HCT116 (cell line): ENCODE measurements at regions of chr4 and their contacts with region 1.

Region 1: DNA sequence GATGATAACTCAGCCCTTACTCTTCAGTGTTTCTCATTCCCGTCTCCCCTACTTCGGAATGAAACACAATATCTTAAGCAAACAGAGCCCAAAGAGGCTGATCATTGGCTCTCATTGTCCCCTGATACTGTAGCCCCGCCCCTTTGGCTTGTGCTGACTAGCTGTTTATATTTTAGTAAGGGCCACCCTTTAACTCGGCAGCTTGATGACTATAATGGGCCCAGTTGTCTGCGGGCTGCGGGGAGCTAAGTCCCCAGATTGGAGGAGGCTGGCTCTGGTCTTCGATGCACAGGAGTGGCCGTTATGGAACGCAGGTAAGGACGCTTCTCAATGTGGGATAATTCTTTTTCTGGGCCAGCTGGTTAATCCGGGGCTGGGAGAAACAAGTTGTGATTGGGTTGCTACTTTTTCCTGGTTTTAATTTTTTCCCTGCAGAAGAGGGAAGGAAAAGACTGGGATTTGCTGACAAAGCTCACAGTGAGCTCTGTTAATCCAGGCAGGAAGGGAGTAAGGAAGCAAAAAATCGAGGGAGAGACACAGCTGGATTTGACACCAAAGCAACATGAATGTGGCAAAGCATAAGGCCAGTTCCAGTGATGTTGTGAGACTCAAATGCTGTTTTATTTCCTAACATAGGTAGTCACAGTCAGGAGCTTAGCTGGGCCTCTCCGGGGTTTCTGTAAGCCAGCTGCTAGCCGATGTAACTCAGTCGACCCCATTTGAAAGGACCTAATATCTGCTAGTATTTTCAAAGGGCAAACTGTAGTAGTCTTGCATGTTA is at the start of gene TRIM2:
- DNase-seq: peak; percentile 86
- ATAC-seq: peak; percentile 73
- H3K4me3 ChIP-seq: peak within 1 kb of the TSS; percentile 64 to 69
- H3K27ac ChIP-seq: peak within 1 kb of the TSS; percentile 86
- H3K4me1 ChIP-seq: peaks cover 21 to 49% of the 10 kb centered on the region in 2 experiments
- H3K27me3 ChIP-seq: no peaks in the 10 kb centered on the region
- CTCF ChIP-seq: no peak
- POLR2A ChIP-seq: peak; percentile 82
- RAD21 ChIP-seq: no peak
- total RNA-seq, gene TRIM2: 41.4 TPM

Region 2: DNA sequence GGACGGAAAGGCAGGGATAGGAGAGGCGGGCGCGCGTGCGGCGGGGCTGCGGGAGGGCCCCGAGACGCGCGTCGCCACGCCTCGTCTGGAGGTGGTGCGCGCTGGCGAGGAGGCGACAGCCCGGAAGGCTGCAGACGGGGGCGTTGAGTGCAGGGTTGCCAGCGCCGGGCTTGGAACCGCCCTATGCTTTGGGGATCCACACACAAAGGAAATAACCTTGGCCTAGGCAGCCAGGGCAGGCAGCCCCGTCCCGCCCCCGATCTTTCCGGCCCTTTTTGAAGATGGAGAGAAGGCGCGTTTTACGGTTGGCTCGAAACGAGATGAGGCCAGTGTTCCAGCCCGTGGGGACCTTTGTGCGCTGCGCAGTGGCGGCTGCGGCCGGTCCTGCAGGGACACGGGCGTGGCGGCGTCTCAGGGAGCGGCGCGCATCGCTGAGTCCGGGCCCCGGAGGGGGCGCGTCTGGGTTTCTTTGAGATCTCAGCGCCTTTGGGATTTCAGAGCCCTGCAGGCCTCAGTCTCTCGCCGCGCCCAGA is 51.0 kb before region 1 on chr4:
- CTCF ChIA-PET with region 1: interaction called, 4 read pairs
- POLR2A ChIA-PET with region 1: interaction called, 4 read pairs
- RAD21 ChIA-PET with region 1: interaction called in 1 of 2 experiments, 4 read pairs
- intact Hi-C with region 1: loop called (anchors 2 kb)
- DNase-seq: no peak
- ATAC-seq: peak; percentile 83
- H3K4me3 ChIP-seq: peak overlapping the region; percentile 38 to 67
- H3K27ac ChIP-seq: peak overlapping the region; percentile 26; the same call in 1 of the 2 replicates
- H3K4me1 ChIP-seq: peaks cover 21 to 35% of the 10 kb centered on the region in 2 experiments
- H3K27me3 ChIP-seq: no peaks in the 10 kb centered on the region
- CTCF ChIP-seq: no peak
- POLR2A ChIP-seq: no peak
- RAD21 ChIP-seq: no peak

Region 3: GRCh38 chr4:154332681-154333421 is 1128.4 kb after region 1 on chr4:
- CTCF ChIA-PET with region 1: no interaction called
- POLR2A ChIA-PET with region 1: no interaction called
- RAD21 ChIA-PET with region 1: no interaction called
- intact Hi-C with region 1: no loop called
- DNase-seq: no peak
- ATAC-seq: no peak
- H3K4me3 ChIP-seq: no peak overlapping the region
- H3K27ac ChIP-seq: no peak overlapping the region
- H3K4me1 ChIP-seq: no peaks in the 10 kb centered on the region
- H3K27me3 ChIP-seq: no peaks in the 10 kb centered on the region
- CTCF ChIP-seq: no peak
- POLR2A ChIP-seq: no peak
- RAD21 ChIP-seq: no peak